ENCODE measurements at regions of chr18 and their contacts with region 1.

Region 1: GRCh38 chr18:61459896-61460648 is 126.8 kb downstream of the CDH20 start:
- DNase-seq: no peak
- H3K4me3 ChIP-seq: peak overlapping the region in 4 of 59 donors; percentile 1 to 9 (median 6)
- H3K27ac ChIP-seq: peak overlapping the region in 52 of 59 donors; percentile 0 to 87 (median 62)
- H3K27me3 ChIP-seq: no peaks in the 10 kb centered on the region
- CTCF ChIP-seq: no peak

Region 2: DNA sequence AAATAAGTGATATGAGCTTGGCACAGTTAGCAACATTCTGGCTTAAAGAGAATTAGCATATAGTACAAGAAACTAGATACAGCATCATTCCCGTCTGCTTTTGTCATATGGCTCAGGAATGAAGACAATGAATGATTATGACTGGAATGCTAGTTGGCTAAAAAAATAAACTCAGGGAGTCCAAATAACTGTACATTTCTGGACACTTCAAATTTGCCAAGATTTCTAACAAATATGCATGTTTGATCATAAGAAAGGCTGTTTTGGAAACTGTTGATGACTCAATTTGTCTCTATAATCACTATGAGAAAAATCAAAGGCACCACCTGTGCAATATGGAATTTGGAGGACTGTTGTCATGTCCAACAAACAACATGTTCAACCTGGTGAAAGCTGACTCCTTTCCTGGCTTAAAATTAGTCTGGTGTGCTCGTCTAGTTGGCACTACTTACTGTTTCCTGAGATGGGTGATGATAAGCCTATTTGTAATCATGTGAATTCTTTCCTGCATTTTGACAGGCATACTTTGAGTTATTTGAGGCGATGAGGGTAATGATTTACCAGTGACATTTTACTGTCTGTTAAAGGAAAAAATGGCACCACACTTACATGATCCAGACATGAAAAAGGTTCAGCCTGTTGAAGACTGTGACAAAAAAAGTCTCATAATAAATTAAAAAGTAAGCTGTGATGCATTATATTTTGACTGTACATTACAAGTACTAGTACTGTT is 260.7 kb before region 1 on chr18:
- intact Hi-C with region 1: no loop called
- DNase-seq: no peak
- H3K4me3 ChIP-seq: no peak overlapping the region
- H3K27ac ChIP-seq: no peak overlapping the region
- H3K27me3 ChIP-seq: no peaks in the 10 kb centered on the region
- CTCF ChIP-seq: no peak

Region 3: DNA sequence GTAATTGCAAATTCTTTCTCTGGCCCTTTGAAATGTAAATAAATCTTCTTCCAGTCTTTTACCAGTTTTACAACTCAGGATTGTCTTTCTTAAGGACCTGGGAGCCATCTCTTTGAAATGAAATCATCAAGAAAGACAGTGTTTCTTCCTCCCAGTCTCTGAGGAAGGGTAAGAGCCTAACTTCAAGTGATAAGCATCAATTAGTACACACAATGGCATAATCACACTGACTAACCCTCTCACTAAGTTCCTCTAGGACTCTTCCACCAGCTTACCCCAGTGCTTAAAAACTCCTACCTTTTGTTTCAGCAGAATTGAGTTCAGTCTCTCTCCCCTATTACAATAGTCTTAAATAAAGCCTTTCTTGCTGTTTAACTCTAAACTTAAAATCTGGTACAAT is 185.5 kb before region 1 on chr18:
- intact Hi-C with region 1: no loop called
- DNase-seq: no peak
- H3K4me3 ChIP-seq: no peak overlapping the region
- H3K27ac ChIP-seq: no peak overlapping the region
- H3K27me3 ChIP-seq: no peaks in the 10 kb centered on the region
- CTCF ChIP-seq: no peak

Region 4: DNA sequence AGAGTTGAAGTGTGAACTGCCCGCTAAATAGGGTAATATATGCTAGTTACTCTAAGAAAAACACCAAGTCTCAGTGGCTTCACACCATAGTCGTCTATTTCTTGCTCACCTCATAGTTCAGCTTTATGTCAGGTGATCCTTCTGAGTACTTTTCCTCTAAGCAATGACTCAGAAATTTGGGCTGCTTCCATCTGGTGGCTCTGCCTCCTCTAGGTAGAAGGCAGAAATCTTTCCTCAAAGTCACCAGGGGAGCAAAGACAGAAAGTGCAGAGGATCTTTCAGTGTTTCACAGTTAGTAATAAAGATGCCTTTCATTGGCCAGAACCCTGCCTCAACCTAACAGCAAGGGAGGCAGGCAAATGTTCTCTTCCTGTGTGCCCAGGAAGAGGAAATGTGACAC is 109.5 kb before region 1 on chr18:
- intact Hi-C with region 1: no loop called
- DNase-seq: no peak
- H3K4me3 ChIP-seq: no peak overlapping the region
- H3K27ac ChIP-seq: peak overlapping the region in 26 of 59 donors; percentile 6 to 78 (median 34)
- H3K27me3 ChIP-seq: no peaks in the 10 kb centered on the region
- CTCF ChIP-seq: no peak

Region 5: DNA sequence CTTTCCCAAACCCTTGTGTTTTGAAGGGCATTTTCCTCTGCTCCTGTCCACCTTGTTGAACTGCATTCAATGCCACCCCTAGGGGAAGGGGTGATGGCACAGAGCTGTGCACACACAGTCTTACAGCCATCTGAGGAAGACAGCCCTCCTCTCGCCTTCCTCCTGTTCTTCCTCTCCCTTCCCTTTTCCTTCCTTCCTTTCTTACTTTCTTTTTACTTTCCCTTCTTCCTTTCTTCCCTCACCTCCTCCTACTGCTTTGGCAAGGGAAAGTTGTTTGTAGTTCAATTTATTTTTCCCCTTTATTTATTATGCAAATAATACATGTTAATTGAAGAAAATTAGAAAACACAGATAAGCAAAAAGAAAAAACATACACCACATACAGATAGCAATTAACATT is 27.5 kb before region 1 on chr18:
- intact Hi-C with region 1: loop called in 1 of 2 experiments (anchors 2 kb)
- DNase-seq: no peak
- H3K4me3 ChIP-seq: no peak overlapping the region
- H3K27ac ChIP-seq: peak overlapping the region in 10 of 59 donors; percentile 1 to 52 (median 26)
- H3K27me3 ChIP-seq: no peaks in the 10 kb centered on the region
- CTCF ChIP-seq: no peak

Region 6: GRCh38 chr18:61496374-61496773 is 36.3 kb after region 1 on chr18:
- intact Hi-C with region 1: loop called in 1 of 2 experiments (anchors 5 kb)
- DNase-seq: no peak
- H3K4me3 ChIP-seq: no peak overlapping the region
- H3K27ac ChIP-seq: peak overlapping the region in 6 of 59 donors; percentile 8 to 53 (median 26)
- H3K27me3 ChIP-seq: no peaks in the 10 kb centered on the region
- CTCF ChIP-seq: no peak

Measured in dorsolateral prefrontal cortex (tissue), 120 donors.